Activated CD4-positive, alpha-beta T cell treated with anti-CD3 and anti-CD28 coated beads, Interleukin-2, amount 10 ng/mL, durations not matched to agents 24 days and 14 days (primary cell): ENCODE measurements at regions of chr7 and their contacts with region 1.

Region 1: GRCh38 chr7:118214051-118214832 is 10.3 kb upstream of the ANKRD7 start:
- DNase-seq: peak; percentile 81
- H3K4me3 Mint-ChIP-seq: peak overlapping the region; percentile 81
- H3K27ac Mint-ChIP-seq: peak overlapping the region; percentile 43
- H3K4me1 Mint-ChIP-seq: peaks cover 9% of the 10 kb centered on the region
- H3K27me3 Mint-ChIP-seq: peaks cover 42% of the 10 kb centered on the region

Region 2: DNA sequence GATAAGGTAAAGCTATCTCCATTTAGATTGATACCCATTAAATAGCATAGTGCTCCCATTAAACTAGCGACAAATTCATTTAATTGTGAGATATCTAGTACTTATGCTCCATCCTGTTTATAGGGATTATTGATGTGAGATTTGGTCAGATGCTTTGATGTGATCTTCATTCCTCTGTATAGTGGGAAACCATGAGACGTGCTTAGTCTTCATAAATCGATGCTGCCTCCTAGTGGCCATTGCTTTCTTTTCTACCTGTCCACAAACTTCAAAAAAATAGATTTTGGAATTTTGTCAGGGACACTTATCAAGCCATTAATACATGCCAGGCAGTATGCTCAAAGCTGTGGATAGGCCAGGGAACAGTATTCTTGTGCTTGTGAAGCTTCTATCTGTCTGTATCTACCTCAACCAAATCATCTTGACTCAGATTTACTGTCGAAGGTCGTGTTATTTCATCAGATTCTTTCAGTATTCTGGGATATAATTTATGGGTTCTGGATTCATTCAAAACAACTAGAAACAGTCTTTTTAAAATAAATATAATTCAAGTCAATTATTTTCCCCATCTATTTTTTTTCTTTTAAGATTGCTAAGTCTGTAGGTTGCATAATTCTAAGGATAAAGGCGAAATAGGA is 18.3 kb before region 1 on chr7:
- intact Hi-C with region 1: loop called (anchors 1 kb)
- DNase-seq: peak; percentile 85
- H3K4me3 Mint-ChIP-seq: no peak overlapping the region
- H3K27ac Mint-ChIP-seq: no peak overlapping the region
- H3K4me1 Mint-ChIP-seq: peaks cover 7% of the 10 kb centered on the region
- H3K27me3 Mint-ChIP-seq: no peaks in the 10 kb centered on the region

Region 3: GRCh38 chr7:118280319-118281012 is 66.2 kb after region 1 on chr7:
- intact Hi-C with region 1: no loop called
- DNase-seq: no peak
- H3K4me3 Mint-ChIP-seq: no peak overlapping the region
- H3K27ac Mint-ChIP-seq: no peak overlapping the region
- H3K4me1 Mint-ChIP-seq: no peaks in the 10 kb centered on the region
- H3K27me3 Mint-ChIP-seq: peaks cover 51% of the 10 kb centered on the region